ENCODE measurements at regions of chr14 and their contacts with region 1.

Region 1: DNA sequence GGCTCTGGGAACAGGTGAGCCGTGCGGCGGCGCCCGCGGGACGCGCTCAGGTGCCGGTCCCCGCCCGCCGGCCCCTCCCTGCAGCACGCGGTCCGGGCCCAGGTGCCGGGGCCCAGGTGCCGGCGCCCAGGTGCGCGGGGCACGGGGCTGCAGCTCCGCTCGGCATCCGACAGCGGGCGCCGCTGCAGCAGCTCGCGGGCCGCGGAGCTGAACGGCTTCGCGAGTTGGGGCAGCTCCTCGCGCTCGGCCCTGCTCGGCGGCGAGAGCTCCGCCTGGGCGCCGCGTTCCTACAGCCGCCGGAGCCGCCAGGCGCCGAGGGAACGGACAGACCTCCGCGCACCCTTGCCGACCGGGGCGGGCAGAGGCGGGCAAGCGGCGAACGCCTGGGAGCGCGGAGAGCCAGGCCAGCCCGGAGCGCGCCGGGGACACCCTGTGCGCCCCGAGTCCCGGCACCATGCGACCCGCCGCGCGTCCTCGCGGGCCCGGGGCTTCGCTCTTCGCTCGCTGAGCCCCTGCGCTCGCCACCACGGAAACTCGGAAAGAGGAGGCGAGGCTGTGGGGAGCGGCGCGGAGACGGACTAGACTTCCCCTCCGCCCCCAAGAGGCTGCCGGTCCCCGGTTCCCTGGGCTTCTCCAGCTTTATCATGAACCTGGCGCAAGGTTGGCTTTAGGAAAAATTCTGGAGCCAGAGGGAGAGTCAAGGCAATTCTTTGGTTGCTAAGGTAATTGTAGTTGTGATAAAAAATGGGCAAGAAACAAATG is at the start of gene RGS6:
- DNase-seq: no peak
- ATAC-seq: peak; percentile 93 to 94
- total RNA-seq, gene RGS6: 12.4 to 18.5 TPM

Region 2: DNA sequence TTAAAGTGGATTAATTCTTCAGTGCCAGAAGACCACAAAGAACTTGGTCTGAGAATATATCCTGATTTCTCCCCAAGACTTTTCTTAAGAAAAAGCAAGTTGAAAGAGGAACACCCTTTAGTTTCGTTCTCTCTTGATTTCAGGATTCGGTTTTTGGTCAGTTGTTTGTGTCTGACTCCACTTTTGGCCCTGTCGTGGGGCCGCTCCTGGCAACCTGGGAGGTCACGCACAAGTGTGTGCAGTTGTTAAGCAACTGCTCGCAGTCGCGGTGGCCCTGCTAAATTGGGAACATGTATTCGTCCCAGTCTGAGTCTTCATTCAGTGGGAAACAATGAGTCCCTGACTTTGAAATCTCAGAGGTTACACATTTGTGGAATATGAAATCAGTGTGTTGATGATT is 68.5 kb after region 1 on chr14:
- intact Hi-C with region 1: no loop called
- DNase-seq: peak; percentile 49
- ATAC-seq: peak; percentile 71 to 75

Region 3: GRCh38 chr14:72291908-72292688 is 359.7 kb after region 1 on chr14:
- intact Hi-C with region 1: loop called (anchors 1 to 5 kb)
- DNase-seq: no peak
- ATAC-seq: peak; percentile 77 to 88

Region 4: DNA sequence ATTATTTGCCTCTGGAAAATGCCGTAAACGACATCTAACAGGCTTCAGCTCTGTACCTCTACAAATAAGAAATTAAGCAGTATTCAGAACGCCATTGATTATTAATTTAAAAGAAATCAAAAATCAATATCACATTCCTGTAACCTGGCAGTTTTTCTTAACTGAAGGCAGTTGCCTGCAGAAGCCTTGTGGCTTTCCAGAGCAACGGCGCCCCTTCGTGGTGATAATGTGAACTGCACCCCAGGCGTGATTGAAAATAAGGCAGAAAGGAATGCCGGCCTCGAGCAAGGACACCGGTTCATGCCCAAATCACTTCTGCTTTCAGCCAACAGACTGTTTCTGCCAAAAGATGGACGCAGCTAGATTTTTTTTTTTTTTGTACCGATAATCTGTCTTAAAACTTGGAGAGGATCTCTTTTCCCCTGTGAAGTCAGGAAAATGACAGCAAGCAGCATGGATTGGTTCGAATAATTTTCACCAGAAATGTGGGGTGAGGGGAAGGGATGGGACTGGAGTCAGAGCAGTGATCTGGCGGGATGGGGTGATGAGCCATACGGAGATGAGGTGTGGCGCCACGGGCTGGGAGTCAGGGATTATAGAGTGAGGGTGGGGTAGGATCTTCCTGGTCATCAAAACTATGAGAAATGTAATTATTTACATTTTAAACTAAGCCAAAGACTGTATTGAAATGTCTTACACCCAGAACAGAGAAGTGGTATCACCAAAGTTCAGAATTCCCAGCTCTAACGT is 488.5 kb after region 1 on chr14:
- intact Hi-C with region 1: loop called in 1 of 2 experiments (anchors 10 kb)
- DNase-seq: peak; percentile 66
- ATAC-seq: peak in 1 of 2 donors; percentile 44